HepG2 (cell line): ENCODE measurements at regions of chr17 and their contacts with region 1.

Region 1: DNA sequence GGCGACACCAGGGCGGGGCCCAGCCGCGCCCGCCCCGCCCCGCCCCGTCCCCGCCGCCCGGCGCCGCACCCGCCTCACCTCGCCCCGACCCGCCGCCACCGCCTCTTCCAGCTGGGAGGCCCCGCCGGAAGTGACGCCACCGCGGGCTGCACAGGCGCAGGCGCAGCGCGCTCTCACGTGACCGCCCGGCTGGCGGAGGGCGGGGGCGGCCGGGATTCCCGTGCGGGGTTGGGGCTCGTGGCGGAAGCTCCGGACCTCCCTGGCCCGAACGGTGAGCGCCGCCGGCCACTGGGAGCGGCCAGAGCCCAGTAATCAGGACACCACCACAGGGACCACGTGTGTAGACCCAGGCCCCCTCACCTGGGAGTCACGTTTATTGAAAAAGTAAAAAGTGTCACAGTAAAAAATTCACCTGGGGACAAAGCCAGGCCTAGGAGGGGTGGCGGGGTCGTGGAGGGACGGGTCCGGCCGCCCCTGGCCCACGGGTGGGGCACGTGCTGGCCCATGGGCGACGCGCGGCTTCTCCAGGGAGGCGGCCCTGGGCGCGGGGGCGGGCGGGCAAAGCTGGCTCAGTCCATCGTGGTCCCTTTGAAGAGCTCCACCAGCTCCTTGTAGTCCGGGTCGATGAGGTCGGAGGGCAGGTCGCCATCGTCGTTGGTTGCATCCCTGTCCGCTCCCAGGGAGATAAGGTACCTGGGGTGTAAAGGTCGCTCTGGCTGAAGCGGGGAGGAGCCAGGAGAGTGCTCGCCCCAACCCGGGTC is at the start of gene MCRIP1:
- DNase-seq: peak; percentile 91
- ATAC-seq: peak; percentile 69
- H3K4me3 ChIP-seq: peak within 1 kb of the TSS; percentile 80 to 86 (median 84)
- H3K27ac ChIP-seq: peak within 1 kb of the TSS; percentile 93
- H3K4me1 ChIP-seq: peaks cover 66% of the 10 kb centered on the region
- H3K27me3 ChIP-seq: no peaks in the 10 kb centered on the region; a peak in 1 of 5 replicates
- CTCF ChIP-seq: peak; percentile 1; the same call in 1 of the 2 replicates
- EP300 ChIP-seq: no peak
- POLR2A ChIP-seq: peak; percentile 79
- RAD21 ChIP-seq: peak; percentile 46
- total RNA-seq, gene MCRIP1: 76.1 and 84.9 TPM in 2 replicates

Region 2: DNA sequence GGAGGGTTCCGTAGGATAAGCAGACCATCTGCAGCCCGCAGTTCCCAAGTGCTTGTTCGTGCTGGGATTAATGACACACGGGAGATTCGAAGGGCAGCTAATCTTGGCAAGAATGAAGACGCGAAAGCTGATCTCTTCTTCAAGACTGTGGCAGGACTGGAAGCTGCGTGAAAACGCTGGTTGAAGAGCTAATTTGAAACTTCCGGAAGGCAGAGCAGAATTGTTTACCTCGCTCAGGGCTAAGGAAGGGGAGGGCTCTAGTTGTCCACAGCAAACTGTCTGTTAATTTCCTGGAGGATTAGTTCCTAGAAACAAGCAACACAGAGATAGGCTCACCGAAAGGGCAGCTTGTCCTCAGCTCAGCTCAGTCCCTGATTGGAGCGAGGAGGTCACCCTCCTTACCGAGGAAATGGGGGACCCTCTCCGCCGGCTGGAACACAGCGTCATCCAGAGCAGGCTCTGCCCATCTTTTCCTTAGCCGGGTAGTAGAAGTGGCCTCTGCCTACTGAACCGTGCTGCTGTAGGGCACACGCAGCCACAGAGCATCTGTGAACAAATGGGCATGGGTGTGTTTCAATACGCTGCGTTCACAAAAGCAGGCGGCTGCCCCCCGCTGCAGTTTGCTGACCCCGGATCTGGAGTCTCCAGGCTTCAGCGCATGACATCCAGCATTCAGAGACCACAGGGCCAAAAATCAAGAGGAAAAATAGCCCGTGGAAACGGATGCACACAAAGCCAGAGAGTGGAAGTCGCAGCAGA is 815.1 kb before region 1 on chr17:
- CTCF ChIA-PET with region 1: no interaction called
- POLR2A ChIA-PET with region 1: no interaction called
- in situ Hi-C with region 1: no loop called
- intact Hi-C with region 1: no loop called
- DNase-seq: no peak
- ATAC-seq: peak; percentile 61
- H3K4me3 ChIP-seq: peak overlapping the region; percentile 34 to 71 (median 47)
- H3K27ac ChIP-seq: no peak overlapping the region
- H3K4me1 ChIP-seq: peaks cover 56% of the 10 kb centered on the region
- H3K27me3 ChIP-seq: peaks cover 1 to 38% of the 10 kb centered on the region in 2 experiments; a peak in 3 of 5 replicates
- CTCF ChIP-seq: no peak
- EP300 ChIP-seq: no peak
- POLR2A ChIP-seq: no peak
- RAD21 ChIP-seq: no peak

Region 3: DNA sequence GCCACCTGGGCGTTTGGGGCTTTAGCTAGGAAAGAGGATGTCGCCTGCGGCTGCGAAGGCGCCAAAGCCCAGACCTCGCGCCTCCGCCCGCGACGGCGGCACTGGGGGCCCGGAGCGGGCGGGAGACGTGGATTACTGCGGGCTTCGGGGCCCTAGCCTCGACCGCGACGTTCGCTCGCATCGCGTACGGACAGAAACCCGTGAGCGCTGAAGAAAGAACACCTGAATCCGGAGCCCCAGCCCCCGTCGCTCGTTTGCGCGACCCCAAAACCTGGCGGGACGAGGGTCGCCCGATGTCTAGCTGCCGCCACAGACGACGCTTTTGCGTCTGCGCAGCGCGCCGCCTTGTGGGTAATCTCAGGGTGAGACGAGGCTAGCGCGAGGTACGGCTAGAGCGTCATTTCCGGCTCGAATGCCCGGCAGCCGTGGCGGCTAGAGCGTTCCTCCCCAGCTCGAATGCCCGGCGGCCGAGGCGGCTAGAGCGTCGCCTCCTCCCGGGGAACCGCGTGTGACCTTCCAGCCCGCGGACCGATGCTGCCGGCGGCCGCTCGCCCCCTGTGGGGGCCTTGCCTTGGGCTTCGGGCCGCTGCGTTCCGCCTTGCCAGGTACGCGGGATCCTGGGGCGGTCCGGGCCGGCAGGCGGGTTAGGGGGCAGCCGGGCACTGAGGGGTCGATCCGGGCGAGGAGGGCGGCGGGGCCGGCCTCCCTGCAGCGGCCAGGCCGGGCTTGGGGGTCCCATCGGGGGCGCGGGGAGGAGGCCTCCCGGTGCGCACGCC is 130.2 kb before region 1 on chr17 and contains the start of gene MRPL12:
- CTCF ChIA-PET with region 1: no interaction called
- POLR2A ChIA-PET with region 1: interaction called, 21 read pairs
- in situ Hi-C with region 1: no loop called
- intact Hi-C with region 1: no loop called
- DNase-seq: peak; percentile 91
- ATAC-seq: peak; percentile 82
- H3K4me3 ChIP-seq: peak within 1 kb of the TSS; percentile 92 to 93 (median 92)
- H3K27ac ChIP-seq: peak within 1 kb of the TSS; percentile 93
- H3K4me1 ChIP-seq: peaks cover 33% of the 10 kb centered on the region
- H3K27me3 ChIP-seq: no peaks in the 10 kb centered on the region; a peak in 1 of 5 replicates
- CTCF ChIP-seq: peak; percentile 69
- EP300 ChIP-seq: 0 out of 4 replicates have a peak, but pooled peaks of 1 of the 2 experiments have one; percentile 37
- POLR2A ChIP-seq: peak in 1 of 2 experiments; percentile 96; a peak in 2 of 4 replicates
- RAD21 ChIP-seq: peak; percentile 47
- total RNA-seq, gene MRPL12: 39.1 and 72.5 TPM in 2 replicates

Region 4: GRCh38 chr17:81722184-81723120 is 110.9 kb before region 1 on chr17:
- CTCF ChIA-PET with region 1: no interaction called
- POLR2A ChIA-PET with region 1: interaction called, 15 read pairs
- in situ Hi-C with region 1: no loop called
- intact Hi-C with region 1: no loop called
- DNase-seq: no peak
- ATAC-seq: peak; percentile 20
- H3K4me3 ChIP-seq: no peak overlapping the region
- H3K27ac ChIP-seq: peak overlapping the region; percentile 31
- H3K4me1 ChIP-seq: peaks cover 33% of the 10 kb centered on the region
- H3K27me3 ChIP-seq: no peaks in the 10 kb centered on the region
- CTCF ChIP-seq: no peak
- EP300 ChIP-seq: no peak
- POLR2A ChIP-seq: peak; percentile 16 to 81; a peak in 2 of 4 replicates
- RAD21 ChIP-seq: 0 out of 2 replicates have a peak, but pooled peaks have one; percentile 13

Region 5: DNA sequence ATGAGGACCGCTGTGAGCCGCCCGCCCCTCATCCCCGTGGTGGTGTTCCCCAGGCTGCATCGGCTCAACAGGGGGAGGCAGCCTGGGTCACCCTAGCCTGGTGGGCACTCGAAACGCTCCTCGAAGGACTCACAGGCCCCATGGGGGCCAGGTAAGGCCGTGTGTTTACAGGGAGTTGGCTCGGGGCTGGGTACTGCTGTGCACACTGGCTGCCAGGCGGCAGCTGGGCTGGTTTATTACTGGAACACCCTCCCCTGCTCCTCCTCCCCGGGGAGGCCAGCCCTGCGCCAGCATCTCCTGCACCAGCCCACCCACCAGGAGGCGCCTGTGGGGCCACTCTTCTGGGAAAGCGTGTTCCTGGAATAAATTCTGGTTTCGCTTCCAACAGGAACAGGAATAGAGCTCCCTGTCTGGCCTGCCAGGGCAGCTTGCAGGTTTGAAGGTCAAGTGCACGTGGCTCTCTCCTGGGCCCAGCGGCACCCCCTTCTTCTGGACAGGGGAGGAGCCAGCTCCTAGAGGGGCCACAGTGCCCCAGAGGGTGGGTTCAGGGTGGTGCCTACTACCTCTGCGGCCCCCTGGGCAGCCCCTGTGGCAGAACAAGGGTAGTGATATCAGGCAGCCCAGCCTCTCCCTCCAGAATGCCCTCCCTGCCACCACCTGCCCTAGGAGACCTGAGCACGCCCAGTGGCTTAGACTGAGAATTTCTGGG is 11.6 kb before region 1 on chr17:
- CTCF ChIA-PET with region 1: interaction called, 3 read pairs
- POLR2A ChIA-PET with region 1: interaction called, 52 read pairs
- in situ Hi-C with region 1: no loop called
- intact Hi-C with region 1: no loop called
- DNase-seq: peak; percentile 84
- ATAC-seq: peak; percentile 84
- H3K4me3 ChIP-seq: peak overlapping the region in 1 of 3 experiments; percentile 40; a peak in 1 of 6 replicates
- H3K27ac ChIP-seq: peak overlapping the region; percentile 53
- H3K4me1 ChIP-seq: peaks cover 37% of the 10 kb centered on the region
- H3K27me3 ChIP-seq: no peaks in the 10 kb centered on the region; a peak in 2 of 5 replicates
- CTCF ChIP-seq: peak; percentile 90
- EP300 ChIP-seq: peak in 1 of 2 experiments; percentile 29; a peak in 1 of 4 replicates
- POLR2A ChIP-seq: no peak
- RAD21 ChIP-seq: peak; percentile 91

Region 6: DNA sequence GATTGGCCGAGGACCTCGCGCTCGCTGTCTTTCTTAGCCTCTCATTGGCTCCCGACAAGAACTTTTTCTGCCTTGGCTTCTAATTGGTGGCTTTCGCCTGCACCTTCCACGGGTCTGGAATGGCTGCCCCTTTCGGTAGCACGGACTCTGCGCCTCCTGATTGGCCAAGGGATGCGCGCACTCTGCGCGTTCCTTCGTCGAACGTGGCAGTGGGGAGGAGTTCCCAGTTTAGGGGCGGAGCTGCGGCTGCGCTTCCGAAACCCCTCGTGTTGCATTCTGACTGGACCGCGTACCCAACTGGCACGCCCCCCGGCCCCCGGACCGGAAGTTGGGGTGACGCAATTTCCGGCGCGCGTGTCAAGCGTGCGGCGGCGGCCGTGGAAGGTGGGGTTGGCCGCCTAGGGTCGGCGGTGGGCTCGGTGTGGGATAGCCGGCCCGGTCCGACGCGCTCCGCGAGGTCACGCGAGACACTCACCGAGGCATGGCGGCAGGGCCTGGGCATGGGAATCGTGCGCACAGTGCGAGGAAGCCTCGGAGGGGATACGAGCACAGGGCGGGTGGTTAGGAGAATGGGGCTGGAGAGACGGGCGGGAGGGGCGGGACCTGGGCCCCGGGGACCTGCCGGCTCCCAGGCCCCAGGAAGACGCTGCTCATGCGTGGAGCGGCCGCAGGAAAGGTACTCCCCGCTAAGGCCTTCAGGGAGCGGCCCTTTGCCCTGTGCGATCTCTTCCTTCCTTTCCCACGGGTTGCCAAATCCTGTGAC is 27.6 kb after region 1 on chr17:
- CTCF ChIA-PET with region 1: no interaction called
- POLR2A ChIA-PET with region 1: interaction called, 40 read pairs
- in situ Hi-C with region 1: no loop called
- intact Hi-C with region 1: no loop called
- DNase-seq: peak; percentile 100
- ATAC-seq: peak; percentile 89
- H3K4me3 ChIP-seq: peak overlapping the region; percentile 83 to 91 (median 86)
- H3K27ac ChIP-seq: peak overlapping the region; percentile 94
- H3K4me1 ChIP-seq: peaks cover 77% of the 10 kb centered on the region
- H3K27me3 ChIP-seq: no peaks in the 10 kb centered on the region; a peak in 1 of 5 replicates
- CTCF ChIP-seq: peak; percentile 9; the same call in 1 of the 2 replicates
- EP300 ChIP-seq: peak; percentile 24 to 50; a peak in 3 of 4 replicates
- POLR2A ChIP-seq: peak in 1 of 2 experiments; percentile 94; a peak in 2 of 4 replicates
- RAD21 ChIP-seq: no peak; the same call in 1 of the 2 replicates